AG04449 (cell line): ENCODE measurements at regions of chr1 and their contacts with region 1.

Region 1: GRCh38 chr1:156383023-156383422 is 14.0 kb downstream of the RHBG start:
- DNase-seq: no peak
- H3K4me3 ChIP-seq: no peak overlapping the region
- CTCF ChIP-seq: peak; percentile 93

Region 2: GRCh38 chr1:156368889-156369684 is 13.9 kb before region 1 on chr1 and contains the start of gene RHBG:
- CTCF ChIA-PET with region 1: interaction called, 186 read pairs
- POLR2A ChIA-PET with region 1: no interaction called
- DNase-seq: no peak
- H3K4me3 ChIP-seq: peak within 1 kb of the TSS; percentile 4
- CTCF ChIP-seq: no peak

Region 3: GRCh38 chr1:156421062-156421938 is 38.3 kb after region 1 on chr1:
- CTCF ChIA-PET with region 1: interaction called, 97 read pairs
- POLR2A ChIA-PET with region 1: no interaction called
- DNase-seq: no peak
- H3K4me3 ChIP-seq: peak overlapping the region; percentile 15; the same call in 1 of the 2 replicates
- CTCF ChIP-seq: no peak

Region 4: GRCh38 chr1:156456622-156457465 is 73.8 kb after region 1 on chr1:
- CTCF ChIA-PET with region 1: interaction called, 73 read pairs
- POLR2A ChIA-PET with region 1: interaction called, 3 read pairs
- DNase-seq: peak; percentile 87
- H3K4me3 ChIP-seq: peak overlapping the region; percentile 64
- CTCF ChIP-seq: no peak

Region 5: DNA sequence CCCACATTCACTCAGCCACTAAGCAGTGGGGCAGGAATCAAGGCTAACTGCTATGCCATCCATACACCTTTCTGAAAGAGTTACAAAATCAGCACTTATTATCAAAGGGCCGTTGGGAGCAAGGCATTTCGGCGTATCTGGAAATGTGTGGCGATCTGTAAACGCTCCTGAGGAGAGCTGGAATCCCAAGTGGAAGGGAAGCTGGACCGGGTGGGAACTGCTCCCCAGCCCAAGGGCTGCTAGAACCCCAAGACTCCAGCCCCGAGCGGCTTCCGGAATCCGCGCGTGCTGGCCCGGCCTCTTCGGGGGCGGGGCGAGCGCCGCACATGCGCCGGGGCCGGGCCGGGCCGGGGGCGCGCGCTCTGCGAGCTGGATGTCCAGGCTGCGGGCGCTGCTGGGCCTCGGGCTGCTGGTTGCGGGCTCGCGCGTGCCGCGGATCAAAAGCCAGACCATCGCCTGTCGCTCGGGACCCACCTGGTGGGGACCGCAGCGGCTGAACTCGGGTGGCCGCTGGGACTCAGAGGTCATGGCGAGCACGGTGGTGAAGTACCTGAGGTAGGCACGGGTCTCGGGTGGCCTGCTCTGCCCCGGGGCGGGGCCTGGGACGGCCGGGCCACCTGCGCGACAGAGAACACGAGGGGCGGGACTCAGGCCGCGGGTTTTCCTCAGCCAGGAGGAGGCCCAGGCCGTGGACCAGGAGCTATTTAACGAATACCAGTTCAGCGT is 208.6 kb after region 1 on chr1 and contains the start of gene NAXE:
- CTCF ChIA-PET with region 1: interaction called, 20 read pairs
- POLR2A ChIA-PET with region 1: no interaction called
- DNase-seq: no peak
- H3K4me3 ChIP-seq: peak within 1 kb of the TSS; percentile 83
- CTCF ChIP-seq: no peak

Region 6: GRCh38 chr1:156618853-156619581 is 236.0 kb after region 1 on chr1 and contains the start of gene HAPLN2:
- CTCF ChIA-PET with region 1: interaction called, 33 read pairs
- POLR2A ChIA-PET with region 1: no interaction called
- DNase-seq: no peak
- H3K4me3 ChIP-seq: no peak within 1 kb of the TSS
- CTCF ChIP-seq: peak; percentile 45

Region 7: GRCh38 chr1:156677616-156678596 is 294.9 kb after region 1 on chr1:
- CTCF ChIA-PET with region 1: interaction called, 13 read pairs
- POLR2A ChIA-PET with region 1: no interaction called
- DNase-seq: no peak
- H3K4me3 ChIP-seq: peak overlapping the region; percentile 39
- CTCF ChIP-seq: peak; percentile 92